ENCODE measurements at regions of chr13 and their contacts with region 1.

Region 1: DNA sequence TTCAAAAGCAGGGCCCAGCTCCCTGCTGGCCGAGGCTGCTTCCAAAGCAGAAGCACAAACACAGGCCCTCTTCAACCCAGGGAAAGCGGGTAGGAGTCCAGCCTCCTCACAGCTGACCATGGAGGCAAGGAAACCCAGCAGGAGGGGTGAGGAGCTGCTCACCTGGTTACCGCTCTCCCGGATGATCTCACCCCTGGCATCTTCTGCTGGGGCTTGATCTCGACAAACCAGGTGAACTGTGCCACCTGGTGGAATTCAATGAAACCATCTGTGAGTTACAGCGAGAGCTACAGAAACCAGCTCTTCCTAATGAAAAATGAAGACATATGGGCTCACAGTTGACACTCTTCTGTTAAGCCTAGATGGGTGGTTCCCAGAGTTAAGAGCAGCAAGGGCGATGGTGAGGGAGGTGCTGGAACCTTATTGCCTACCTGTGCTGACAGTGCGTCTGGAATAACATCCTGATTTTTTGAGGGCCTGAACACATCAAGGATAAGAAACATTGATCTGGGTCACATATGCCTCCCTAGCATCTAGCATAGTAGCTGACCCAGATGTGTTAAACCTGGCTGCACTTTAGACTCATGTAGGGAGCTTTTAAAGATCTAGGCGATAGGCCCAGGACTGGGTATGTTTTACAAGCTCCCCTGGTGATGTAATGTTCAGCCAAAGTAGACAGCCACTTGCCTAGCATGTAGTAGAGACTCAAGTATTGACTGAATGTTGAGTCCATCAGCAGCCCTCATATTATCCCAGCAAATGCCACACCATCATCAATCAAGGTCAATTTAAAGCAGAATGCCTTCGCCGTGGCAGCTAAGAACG is 6.1 kb downstream of the DHRS12 start:
- DNase-seq: peak; percentile 44 to 67
- ATAC-seq: peak; percentile 63 to 81
- H3K4me3 ChIP-seq: no peak overlapping the region
- H3K27ac ChIP-seq: peak overlapping the region; percentile 51; a peak in 3 of 6 replicates
- H3K4me1 ChIP-seq: peaks cover 31% of the 10 kb centered on the region
- CTCF ChIP-seq: peak; percentile 63
- EP300 ChIP-seq: no peak
- POLR2A ChIP-seq: no peak
- RAD21 ChIP-seq: peak; percentile 82 to 83

Region 2: DNA sequence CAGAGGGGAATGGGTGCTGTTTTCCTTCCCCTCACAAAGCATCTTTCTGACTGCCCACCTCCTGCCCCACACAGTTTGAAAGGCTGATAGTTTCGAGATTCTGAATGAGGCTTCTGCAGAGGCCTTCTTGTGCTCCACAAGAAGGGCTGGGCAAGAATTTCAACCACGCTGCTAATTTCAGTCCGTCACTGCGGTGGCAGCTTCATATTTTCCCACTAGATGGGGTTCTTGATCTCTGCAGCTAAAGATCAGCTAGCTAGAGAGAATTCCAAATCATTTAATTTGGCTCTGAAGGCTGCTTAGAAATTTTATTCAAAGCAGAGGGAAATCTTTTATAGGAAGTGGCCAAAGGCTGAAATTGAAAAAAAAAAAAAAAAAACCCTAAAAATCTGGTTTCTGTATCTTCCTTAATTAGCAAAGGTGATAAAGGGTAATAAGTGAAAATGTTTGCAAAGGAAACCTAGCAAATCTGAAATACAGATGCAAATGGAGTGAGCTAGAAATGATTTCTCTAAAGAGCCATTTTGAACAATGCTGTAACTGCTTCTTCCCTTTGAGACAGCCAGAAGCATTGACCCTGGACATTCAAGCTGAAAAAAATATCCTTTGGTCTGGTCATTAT is 648.8 kb before region 1 on chr13:
- CTCF ChIA-PET with region 1: interaction called, 19 read pairs
- POLR2A ChIA-PET with region 1: interaction called, 3 read pairs
- DNase-seq: peak in 1 of 2 experiments; percentile 40
- ATAC-seq: peak; percentile 70 to 81
- H3K4me3 ChIP-seq: no peak overlapping the region
- H3K27ac ChIP-seq: no peak overlapping the region
- H3K4me1 ChIP-seq: no peaks in the 10 kb centered on the region
- CTCF ChIP-seq: peak; percentile 48
- EP300 ChIP-seq: no peak
- POLR2A ChIP-seq: no peak
- RAD21 ChIP-seq: peak; percentile 61 to 65

Region 3: GRCh38 chr13:51280474-51280873 is 517.4 kb before region 1 on chr13:
- CTCF ChIA-PET with region 1: no interaction called
- POLR2A ChIA-PET with region 1: no interaction called
- DNase-seq: no peak
- ATAC-seq: no peak
- H3K4me3 ChIP-seq: no peak overlapping the region
- H3K27ac ChIP-seq: no peak overlapping the region
- H3K4me1 ChIP-seq: no peaks in the 10 kb centered on the region
- CTCF ChIP-seq: no peak
- EP300 ChIP-seq: no peak
- POLR2A ChIP-seq: no peak
- RAD21 ChIP-seq: no peak

Region 4: GRCh38 chr13:51435002-51435578 is 362.8 kb before region 1 on chr13:
- CTCF ChIA-PET with region 1: interaction called, 35 read pairs
- POLR2A ChIA-PET with region 1: interaction called, 4 read pairs
- DNase-seq: peak; percentile 1 to 12
- ATAC-seq: no peak
- H3K4me3 ChIP-seq: no peak overlapping the region
- H3K27ac ChIP-seq: no peak overlapping the region
- H3K4me1 ChIP-seq: peaks cover 11% of the 10 kb centered on the region; the same call in 2 of the 3 replicates
- CTCF ChIP-seq: peak; percentile 48
- EP300 ChIP-seq: no peak
- POLR2A ChIP-seq: no peak
- RAD21 ChIP-seq: peak; percentile 63 to 69

Region 5: DNA sequence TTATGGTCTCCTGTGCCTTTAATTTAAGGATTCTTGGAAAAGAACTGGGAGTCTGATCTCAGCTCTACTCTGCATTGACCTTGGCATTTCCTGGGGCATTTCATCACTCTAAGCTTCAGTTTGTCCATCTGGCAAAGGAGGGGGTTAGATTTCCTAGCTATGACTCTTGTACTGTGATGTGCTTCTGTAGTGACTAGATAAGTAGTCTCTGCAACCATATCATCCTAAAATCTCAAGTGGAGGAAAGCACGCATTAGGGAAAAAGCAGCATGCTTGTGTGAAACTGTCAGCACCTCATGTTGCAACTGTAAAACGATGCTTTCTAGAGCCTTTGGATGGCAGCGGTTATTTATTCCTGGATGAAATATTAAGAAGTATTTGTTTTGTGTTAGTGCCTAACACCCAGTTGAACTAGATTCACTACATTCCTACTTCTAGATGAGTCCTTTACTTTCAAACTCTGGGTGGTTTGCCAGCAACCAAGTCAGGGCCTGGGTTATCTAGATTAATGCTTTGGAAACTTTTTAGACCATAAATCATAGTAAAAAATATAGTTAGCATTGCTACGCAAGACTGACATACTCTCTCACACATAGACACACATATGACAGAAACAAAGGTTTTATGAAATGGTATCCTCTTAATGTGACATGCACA is 206.8 kb before region 1 on chr13:
- CTCF ChIA-PET with region 1: interaction called, 13 read pairs
- POLR2A ChIA-PET with region 1: no interaction called
- DNase-seq: peak; percentile 35 to 80
- ATAC-seq: peak; percentile 97 to 99
- H3K4me3 ChIP-seq: peak overlapping the region; percentile 21; the same call in 1 of the 3 replicates
- H3K27ac ChIP-seq: peak overlapping the region; percentile 79 to 92
- H3K4me1 ChIP-seq: peaks cover 82% of the 10 kb centered on the region
- CTCF ChIP-seq: no peak
- EP300 ChIP-seq: peak in 1 of 2 experiments; percentile 66; a peak in 2 of 5 replicates
- POLR2A ChIP-seq: no peak
- RAD21 ChIP-seq: peak in 1 of 2 experiments; percentile 36; a peak in 3 of 5 replicates

Region 6: GRCh38 chr13:51770681-51771417 is 27.0 kb before region 1 on chr13:
- CTCF ChIA-PET with region 1: no interaction called
- POLR2A ChIA-PET with region 1: no interaction called
- DNase-seq: no peak
- ATAC-seq: no peak; a peak in 1 of 6 replicates
- H3K4me3 ChIP-seq: no peak overlapping the region
- H3K27ac ChIP-seq: no peak overlapping the region; a peak in 1 of 6 replicates
- H3K4me1 ChIP-seq: no peaks in the 10 kb centered on the region
- CTCF ChIP-seq: no peak
- EP300 ChIP-seq: no peak
- POLR2A ChIP-seq: no peak
- RAD21 ChIP-seq: no peak